B cell (primary cell): ENCODE measurements at regions of chr1 and their contacts with region 1.

Region 1: GRCh38 chr1:212070720-212071302 is 35.3 kb downstream of the DTL start:
- DNase-seq: peak; percentile 64
- ATAC-seq: no peak
- H3K4me3 ChIP-seq: no peak overlapping the region
- H3K4me3 Mint-ChIP-seq: no peak overlapping the region
- H3K27ac ChIP-seq: no peak overlapping the region
- H3K27ac Mint-ChIP-seq: no peak overlapping the region
- H3K4me1 ChIP-seq: no peaks in the 10 kb centered on the region
- H3K4me1 Mint-ChIP-seq: no peaks in the 10 kb centered on the region
- H3K27me3 ChIP-seq: no peaks in the 10 kb centered on the region
- H3K27me3 Mint-ChIP-seq: no peaks in the 10 kb centered on the region
- CTCF ChIP-seq: peak; percentile 63

Region 2: DNA sequence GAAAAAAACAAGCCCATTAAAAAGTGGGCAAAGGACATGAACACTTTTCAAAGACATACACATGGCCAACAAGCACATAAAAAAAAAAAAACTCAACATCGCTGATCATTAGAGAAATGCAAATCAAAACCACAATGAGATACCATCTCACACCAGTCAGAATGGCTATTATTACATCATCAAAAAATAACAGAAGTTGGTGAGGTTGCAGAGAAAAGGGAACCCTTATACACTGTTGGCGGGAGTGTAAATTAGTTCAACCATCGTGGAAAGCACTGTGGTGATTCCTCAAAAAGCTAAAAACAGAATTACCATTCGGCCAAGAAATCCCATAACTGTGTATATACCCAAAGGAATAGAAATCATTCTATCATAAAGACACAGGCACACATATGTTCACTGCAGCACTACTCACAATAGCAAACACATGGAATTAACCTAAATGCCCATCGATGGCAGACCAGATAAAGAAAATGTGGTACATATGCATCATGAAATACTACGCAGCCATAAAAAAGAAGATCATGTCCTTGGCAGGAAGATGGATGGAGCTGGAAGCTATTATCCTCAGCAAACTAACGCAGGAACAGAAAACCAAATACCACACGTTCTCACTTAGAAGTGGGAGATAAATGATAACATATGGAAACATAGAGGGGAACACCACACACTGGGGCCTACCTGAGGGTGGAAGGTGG is 105.6 kb before region 1 on chr1:
- CTCF ChIA-PET with region 1: no interaction called
- POLR2A ChIA-PET with region 1: no interaction called
- intact Hi-C with region 1: no loop called
- DNase-seq: no peak
- ATAC-seq: no peak
- H3K4me3 ChIP-seq: no peak overlapping the region
- H3K4me3 Mint-ChIP-seq: no peak overlapping the region
- H3K27ac ChIP-seq: no peak overlapping the region
- H3K27ac Mint-ChIP-seq: no peak overlapping the region
- H3K4me1 ChIP-seq: no peaks in the 10 kb centered on the region
- H3K4me1 Mint-ChIP-seq: peaks cover 8% of the 10 kb centered on the region
- H3K27me3 ChIP-seq: no peaks in the 10 kb centered on the region
- H3K27me3 Mint-ChIP-seq: no peaks in the 10 kb centered on the region
- CTCF ChIP-seq: no peak

Region 3: DNA sequence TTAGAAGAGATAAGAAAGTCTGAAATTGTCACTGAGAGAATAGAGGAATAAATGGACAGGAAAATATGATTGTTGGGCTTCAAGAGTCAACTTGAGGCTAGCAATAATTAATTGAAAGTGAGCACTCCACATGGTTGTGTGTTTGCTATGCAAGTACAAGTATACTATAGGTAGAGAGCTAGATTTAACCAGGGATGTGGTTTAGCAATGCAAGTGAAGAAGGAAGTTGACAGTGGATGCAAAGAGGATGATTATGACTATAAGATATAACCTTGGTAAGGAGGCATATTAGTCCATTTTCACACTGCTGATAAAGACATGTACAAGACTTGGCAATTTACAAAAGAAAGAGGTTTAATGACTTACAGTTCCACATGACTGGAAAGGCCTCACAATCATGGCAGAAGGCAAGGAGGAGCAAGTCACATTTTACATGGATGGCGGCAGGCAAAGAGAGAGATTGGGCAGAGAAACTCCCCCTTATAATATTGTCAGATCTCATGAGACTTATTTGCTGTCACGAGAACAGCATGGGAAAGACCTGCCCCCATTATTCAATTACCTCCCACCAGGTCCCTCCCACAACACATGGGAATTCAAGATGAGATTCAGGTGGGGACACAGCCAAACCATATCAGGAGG is 12.1 kb after region 1 on chr1:
- CTCF ChIA-PET with region 1: interaction called, 14 read pairs
- POLR2A ChIA-PET with region 1: no interaction called
- intact Hi-C with region 1: no loop called
- DNase-seq: no peak
- ATAC-seq: no peak
- H3K4me3 ChIP-seq: no peak overlapping the region
- H3K4me3 Mint-ChIP-seq: no peak overlapping the region
- H3K27ac ChIP-seq: no peak overlapping the region
- H3K27ac Mint-ChIP-seq: no peak overlapping the region
- H3K4me1 ChIP-seq: no peaks in the 10 kb centered on the region
- H3K4me1 Mint-ChIP-seq: no peaks in the 10 kb centered on the region
- H3K27me3 ChIP-seq: no peaks in the 10 kb centered on the region
- H3K27me3 Mint-ChIP-seq: no peaks in the 10 kb centered on the region
- CTCF ChIP-seq: no peak

Region 4: DNA sequence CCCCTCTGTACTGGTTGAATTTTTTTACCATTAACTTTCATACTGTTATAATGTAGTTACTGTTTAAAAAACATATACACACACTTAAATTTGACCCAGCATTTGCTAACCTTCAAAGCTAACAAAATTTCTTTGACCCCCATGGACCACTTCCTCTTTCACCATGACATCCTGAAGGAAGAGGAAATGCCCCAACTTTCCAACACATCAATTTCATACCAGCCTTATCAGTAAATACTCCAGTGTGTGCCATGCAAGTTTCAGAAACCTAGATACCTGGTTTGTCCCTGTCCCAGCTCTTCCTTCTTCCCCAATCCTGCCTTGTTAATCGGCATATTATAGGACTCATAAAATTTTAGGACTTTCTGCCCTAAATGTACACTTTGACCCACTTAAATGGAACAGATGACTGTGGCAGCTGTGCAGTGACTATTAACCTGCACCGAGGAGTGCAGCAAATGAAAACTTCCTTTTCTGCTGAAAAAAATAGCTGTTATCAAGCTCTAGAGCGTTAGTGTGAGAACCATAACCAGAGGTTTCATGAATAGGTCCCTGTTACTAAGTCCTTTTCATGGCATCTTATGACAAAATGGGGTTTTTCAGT is 18.9 kb after region 1 on chr1:
- CTCF ChIA-PET with region 1: interaction called, 10 read pairs
- POLR2A ChIA-PET with region 1: no interaction called
- intact Hi-C with region 1: no loop called
- DNase-seq: no peak
- ATAC-seq: no peak
- H3K4me3 ChIP-seq: no peak overlapping the region
- H3K4me3 Mint-ChIP-seq: no peak overlapping the region
- H3K27ac ChIP-seq: peak overlapping the region in 1 of 2 donors; percentile 5
- H3K27ac Mint-ChIP-seq: no peak overlapping the region
- H3K4me1 ChIP-seq: peaks cover 8% of the 10 kb centered on the region in 2 donors
- H3K4me1 Mint-ChIP-seq: peaks cover 13% of the 10 kb centered on the region
- H3K27me3 ChIP-seq: no peaks in the 10 kb centered on the region
- H3K27me3 Mint-ChIP-seq: no peaks in the 10 kb centered on the region
- CTCF ChIP-seq: no peak

Region 5: GRCh38 chr1:212291505-212292134 is 220.8 kb after region 1 on chr1:
- CTCF ChIA-PET with region 1: interaction called, 101 read pairs
- POLR2A ChIA-PET with region 1: no interaction called
- intact Hi-C with region 1: loop called (anchors 1 kb)
- DNase-seq: peak; percentile 78
- ATAC-seq: peak; percentile 87
- H3K4me3 ChIP-seq: no peak overlapping the region
- H3K4me3 Mint-ChIP-seq: peak overlapping the region; percentile 21
- H3K27ac ChIP-seq: no peak overlapping the region
- H3K27ac Mint-ChIP-seq: peak overlapping the region; percentile 46
- H3K4me1 ChIP-seq: peaks cover 29 to 61% of the 10 kb centered on the region in 2 donors
- H3K4me1 Mint-ChIP-seq: peaks cover 77% of the 10 kb centered on the region
- H3K27me3 ChIP-seq: no peaks in the 10 kb centered on the region
- H3K27me3 Mint-ChIP-seq: no peaks in the 10 kb centered on the region
- CTCF ChIP-seq: peak; percentile 82

Region 6: GRCh38 chr1:212311846-212312497 is 241.2 kb after region 1 on chr1:
- CTCF ChIA-PET with region 1: interaction called, 15 read pairs
- POLR2A ChIA-PET with region 1: no interaction called
- intact Hi-C with region 1: no loop called
- DNase-seq: no peak
- ATAC-seq: no peak
- H3K4me3 ChIP-seq: no peak overlapping the region
- H3K4me3 Mint-ChIP-seq: no peak overlapping the region
- H3K27ac ChIP-seq: peak overlapping the region in 1 of 2 donors; percentile 28
- H3K27ac Mint-ChIP-seq: no peak overlapping the region
- H3K4me1 ChIP-seq: peaks cover 6 to 10% of the 10 kb centered on the region in 2 donors
- H3K4me1 Mint-ChIP-seq: peaks cover 47% of the 10 kb centered on the region
- H3K27me3 ChIP-seq: no peaks in the 10 kb centered on the region
- H3K27me3 Mint-ChIP-seq: no peaks in the 10 kb centered on the region
- CTCF ChIP-seq: no peak

Region 7: DNA sequence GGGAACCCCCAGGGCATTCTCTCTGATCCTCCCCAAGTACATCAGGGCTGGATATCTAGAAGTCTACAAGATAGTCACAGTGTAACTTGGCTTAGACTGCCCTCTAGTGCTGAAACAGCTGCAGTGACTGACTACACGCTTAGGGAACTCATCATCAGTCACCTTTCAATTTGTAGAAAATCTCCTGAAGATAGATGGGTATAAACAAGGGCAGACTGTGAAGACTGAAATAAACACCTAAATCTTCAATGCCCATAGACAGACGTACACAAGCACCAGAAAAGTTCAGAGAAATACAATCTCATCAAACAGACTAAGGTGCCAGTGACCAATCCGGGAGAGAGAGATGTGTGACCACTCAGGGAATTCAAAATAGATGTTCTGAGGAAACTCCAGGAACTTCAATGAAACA is 297.3 kb after region 1 on chr1:
- CTCF ChIA-PET with region 1: interaction called, 108 read pairs
- POLR2A ChIA-PET with region 1: no interaction called
- intact Hi-C with region 1: loop called (anchors 1 kb)
- DNase-seq: peak; percentile 72
- ATAC-seq: peak; percentile 80
- H3K4me3 ChIP-seq: no peak overlapping the region
- H3K4me3 Mint-ChIP-seq: no peak overlapping the region
- H3K27ac ChIP-seq: no peak overlapping the region
- H3K27ac Mint-ChIP-seq: no peak overlapping the region
- H3K4me1 ChIP-seq: no peaks in the 10 kb centered on the region
- H3K4me1 Mint-ChIP-seq: peaks cover 2% of the 10 kb centered on the region
- H3K27me3 ChIP-seq: no peaks in the 10 kb centered on the region
- H3K27me3 Mint-ChIP-seq: no peaks in the 10 kb centered on the region
- CTCF ChIP-seq: peak; percentile 86

Region 8: GRCh38 chr1:212375986-212376385 is 305.2 kb after region 1 on chr1:
- CTCF ChIA-PET with region 1: interaction called, 14 read pairs
- POLR2A ChIA-PET with region 1: no interaction called
- intact Hi-C with region 1: no loop called
- DNase-seq: no peak
- ATAC-seq: no peak
- H3K4me3 ChIP-seq: no peak overlapping the region
- H3K4me3 Mint-ChIP-seq: no peak overlapping the region
- H3K27ac ChIP-seq: no peak overlapping the region
- H3K27ac Mint-ChIP-seq: no peak overlapping the region
- H3K4me1 ChIP-seq: no peaks in the 10 kb centered on the region
- H3K4me1 Mint-ChIP-seq: no peaks in the 10 kb centered on the region
- H3K27me3 ChIP-seq: no peaks in the 10 kb centered on the region
- H3K27me3 Mint-ChIP-seq: no peaks in the 10 kb centered on the region
- CTCF ChIP-seq: no peak